HAP-1 (cell line): ENCODE measurements at regions of chr9 and their contacts with region 1.

Region 1: GRCh38 chr9:92790542-92791527 is 26.2 kb upstream of the BICD2 start:
- DNase-seq: peak; percentile 53 to 84
- H3K4me3 ChIP-seq: no peak overlapping the region
- H3K4me1 ChIP-seq: peaks cover 5% of the 10 kb centered on the region
- H3K27me3 ChIP-seq: no peaks in the 10 kb centered on the region

Region 2: GRCh38 chr9:92133949-92134604 is 656.8 kb before region 1 on chr9:
- in situ Hi-C with region 1: loop called (anchors 10 kb)
- DNase-seq: peak; percentile 70 to 93
- H3K4me3 ChIP-seq: peak overlapping the region; percentile 10; the same call in 1 of the 2 replicates
- H3K4me1 ChIP-seq: no peaks in the 10 kb centered on the region
- H3K27me3 ChIP-seq: no peaks in the 10 kb centered on the region

Region 3: DNA sequence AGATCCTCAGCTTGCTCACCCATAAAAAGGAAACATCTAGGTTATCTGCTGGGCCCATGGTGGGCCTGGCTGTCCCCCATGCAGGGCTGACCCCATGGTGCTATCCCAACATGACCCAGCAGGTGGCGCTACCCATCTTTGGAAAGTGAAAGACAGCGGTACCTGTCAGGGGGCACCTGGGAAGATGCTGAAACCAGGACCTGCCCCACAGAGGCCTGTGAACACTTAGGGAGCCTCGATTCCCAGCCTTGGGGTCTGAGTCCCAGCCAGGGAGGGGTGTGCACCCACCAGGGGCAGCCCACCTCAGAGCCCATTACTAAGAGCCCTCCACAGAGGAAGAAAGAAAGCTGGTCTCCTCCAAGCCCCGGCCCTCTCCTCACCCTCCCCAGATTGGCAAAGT is 74.3 kb before region 1 on chr9:
- in situ Hi-C with region 1: loop called (anchors 5 kb)
- DNase-seq: peak; percentile 18 to 91
- H3K4me3 ChIP-seq: no peak overlapping the region
- H3K4me1 ChIP-seq: no peaks in the 10 kb centered on the region
- H3K27me3 ChIP-seq: no peaks in the 10 kb centered on the region